ENCODE measurements at regions of chr20 and their contacts with region 1.

Region 1: DNA sequence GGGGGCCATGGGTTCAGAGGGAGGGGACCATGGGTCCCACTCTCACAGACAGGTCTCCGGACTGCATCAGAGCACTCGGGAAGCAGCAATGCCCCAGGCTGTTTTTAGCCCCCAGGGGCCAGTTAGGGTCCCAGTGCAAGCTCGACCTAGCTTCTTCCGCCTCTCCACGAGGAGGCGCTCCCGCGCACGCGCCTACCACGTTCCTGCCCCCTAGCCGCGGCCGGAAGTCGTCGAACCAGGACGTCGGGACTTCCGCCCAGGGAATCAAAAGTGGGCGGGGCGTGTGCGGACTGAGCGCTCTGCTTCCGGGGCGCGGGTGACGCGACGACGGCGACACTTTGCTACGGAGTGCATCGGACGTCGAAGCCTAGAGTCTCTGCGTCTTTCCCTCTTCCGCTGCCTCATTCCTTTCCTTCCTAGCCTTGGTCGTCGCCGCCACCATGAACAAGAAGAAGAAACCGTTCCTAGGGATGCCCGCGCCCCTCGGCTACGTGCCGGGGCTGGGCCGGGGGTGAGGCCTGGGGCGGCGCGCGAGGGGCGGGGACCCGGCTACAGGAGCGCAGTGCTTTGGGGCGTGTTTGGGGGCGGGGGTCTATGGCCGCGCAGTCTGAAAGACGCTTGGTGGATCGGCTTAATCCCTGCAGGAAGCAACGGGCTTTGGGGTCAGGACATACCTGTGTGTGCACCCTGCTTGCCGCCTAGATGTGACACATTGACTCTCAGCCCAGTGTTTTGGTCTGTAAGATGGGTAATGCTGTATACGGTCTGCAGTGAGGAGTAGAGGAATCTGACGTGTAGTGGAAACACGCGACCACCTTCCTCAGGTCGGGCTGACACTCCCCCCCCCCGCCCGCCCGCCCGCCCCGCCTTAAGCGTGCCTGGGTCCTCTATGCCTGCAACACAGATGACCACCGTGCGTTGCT is at the start of gene PRPF6:
- DNase-seq: peak; percentile 98
- ATAC-seq: peak; percentile 71
- H3K4me3 Mint-ChIP-seq: peak within 1 kb of the TSS; percentile 94
- H3K27ac Mint-ChIP-seq: peak within 1 kb of the TSS; percentile 93
- H3K4me1 Mint-ChIP-seq: peaks cover 21% of the 10 kb centered on the region
- H3K27me3 Mint-ChIP-seq: peaks cover 10% of the 10 kb centered on the region
- CTCF ChIP-seq: peak; percentile 60
- total RNA-seq, gene PRPF6: 79.4 to 84.6 TPM (median 80.5 TPM) in 3 replicates

Region 2: DNA sequence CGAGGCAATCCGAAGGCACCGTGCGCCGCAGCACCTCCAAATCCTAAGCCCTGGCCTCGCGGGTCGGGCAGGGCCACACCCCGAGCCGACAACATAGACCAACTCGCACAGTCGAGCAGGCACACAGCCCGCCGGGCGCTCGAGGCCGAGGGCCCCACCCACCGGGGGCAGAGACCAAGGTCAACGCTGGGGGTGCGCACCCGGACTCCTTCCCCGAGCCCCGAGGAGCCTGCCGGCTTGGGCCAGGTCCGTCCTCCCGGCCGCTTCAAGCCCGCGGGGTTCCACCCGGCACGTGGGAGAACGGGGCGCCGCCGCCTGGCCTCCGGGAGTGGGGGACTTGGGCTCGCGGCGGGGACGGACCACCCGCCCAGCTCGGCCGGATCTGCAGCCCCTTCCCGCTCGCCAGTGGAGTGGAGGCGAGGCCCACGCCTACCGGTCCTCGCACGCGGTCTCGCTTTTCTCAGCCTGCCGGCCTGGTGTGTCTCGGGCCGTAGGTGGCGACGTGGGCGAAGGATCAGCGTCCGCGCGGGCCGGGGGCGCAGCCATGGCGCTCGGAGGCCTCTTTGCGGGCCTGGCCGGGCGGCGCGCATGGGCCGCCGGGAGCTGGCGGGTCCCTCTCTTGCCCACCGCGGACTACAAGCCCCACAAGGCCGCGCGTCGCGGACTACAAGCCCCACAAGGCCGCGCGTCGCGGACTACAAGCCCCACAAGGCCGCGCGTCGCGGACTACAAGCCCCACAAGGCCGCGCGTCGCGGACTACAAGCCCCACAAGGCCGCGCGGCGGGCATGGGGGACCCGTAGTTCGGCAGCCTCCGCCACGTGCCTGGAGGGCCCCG is 25.0 kb before region 1 on chr20 and contains the start of gene UCKL1:
- CTCF ChIA-PET with region 1: interaction called, 15 read pairs
- POLR2A ChIA-PET with region 1: interaction called, 4 read pairs
- DNase-seq: peak; percentile 90
- ATAC-seq: peak; percentile 69
- H3K4me3 Mint-ChIP-seq: peak within 1 kb of the TSS; percentile 79
- H3K27ac Mint-ChIP-seq: no peak within 1 kb of the TSS; the same call in 1 of the 2 replicates
- H3K4me1 Mint-ChIP-seq: peaks cover 20% of the 10 kb centered on the region
- H3K27me3 Mint-ChIP-seq: no peaks in the 10 kb centered on the region
- CTCF ChIP-seq: no peak
- total RNA-seq, gene UCKL1: 46.8 to 51.2 TPM (median 48.0 TPM) in 3 replicates

Region 3: GRCh38 chr20:64038565-64039292 is 57.7 kb after region 1 on chr20:
- CTCF ChIA-PET with region 1: interaction called, 51 read pairs
- POLR2A ChIA-PET with region 1: no interaction called
- DNase-seq: peak; percentile 89
- ATAC-seq: peak; percentile 68
- H3K4me3 Mint-ChIP-seq: peak overlapping the region; percentile 54
- H3K27ac Mint-ChIP-seq: no peak overlapping the region
- H3K4me1 Mint-ChIP-seq: peaks cover 28% of the 10 kb centered on the region
- H3K27me3 Mint-ChIP-seq: peaks cover 43% of the 10 kb centered on the region
- CTCF ChIP-seq: peak; percentile 58

Region 4: DNA sequence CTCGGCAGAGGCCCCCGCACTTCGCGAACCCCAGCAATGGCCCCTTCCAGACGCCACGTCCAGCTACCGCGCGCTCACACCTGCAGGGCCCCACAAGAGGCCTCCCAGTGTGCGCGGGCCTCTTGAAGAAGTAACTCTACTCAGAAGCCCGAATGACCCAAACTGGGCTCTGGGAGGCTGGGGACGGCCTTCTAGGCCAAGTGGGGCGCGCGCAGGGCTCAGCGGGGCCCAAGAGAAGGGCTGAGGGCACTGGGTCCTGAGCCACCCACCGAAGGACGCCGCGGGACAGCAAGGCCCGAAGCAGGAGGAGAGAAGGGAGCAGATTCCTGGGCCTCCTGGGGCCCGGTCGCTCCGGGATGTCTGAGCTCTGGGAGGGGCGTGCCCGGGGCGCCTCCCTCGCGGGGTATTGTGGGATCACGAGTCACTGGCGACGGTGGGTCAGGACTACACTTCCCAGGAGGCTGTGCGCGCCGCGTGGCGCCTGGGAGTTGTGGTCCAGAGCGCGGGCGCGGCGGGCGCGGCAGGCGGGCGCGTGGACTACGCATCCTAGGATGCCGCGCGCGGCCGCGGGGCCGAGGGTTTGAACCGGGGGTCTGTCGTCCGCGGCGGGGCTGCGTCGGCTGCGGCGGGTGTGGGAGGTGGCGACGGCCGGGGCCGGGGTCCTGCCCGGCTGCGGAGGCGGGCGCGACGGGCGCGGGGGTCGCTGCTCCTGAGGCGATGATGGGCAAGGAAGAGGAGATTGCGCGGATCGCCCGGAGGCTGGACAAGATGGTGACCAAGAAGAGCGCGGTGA is 81.7 kb after region 1 on chr20 and contains the start of gene TCEA2:
- CTCF ChIA-PET with region 1: interaction called, 24 read pairs
- POLR2A ChIA-PET with region 1: interaction called, 3 read pairs
- DNase-seq: peak; percentile 95
- ATAC-seq: peak; percentile 84
- H3K4me3 Mint-ChIP-seq: peak within 1 kb of the TSS; percentile 82
- H3K27ac Mint-ChIP-seq: no peak within 1 kb of the TSS; the same call in 1 of the 2 replicates
- H3K4me1 Mint-ChIP-seq: peaks cover 31% of the 10 kb centered on the region
- H3K27me3 Mint-ChIP-seq: peaks cover 7% of the 10 kb centered on the region
- CTCF ChIP-seq: no peak
- total RNA-seq, gene TCEA2: 55.8 to 63.6 TPM (median 63.5 TPM) in 3 replicates

Region 5: DNA sequence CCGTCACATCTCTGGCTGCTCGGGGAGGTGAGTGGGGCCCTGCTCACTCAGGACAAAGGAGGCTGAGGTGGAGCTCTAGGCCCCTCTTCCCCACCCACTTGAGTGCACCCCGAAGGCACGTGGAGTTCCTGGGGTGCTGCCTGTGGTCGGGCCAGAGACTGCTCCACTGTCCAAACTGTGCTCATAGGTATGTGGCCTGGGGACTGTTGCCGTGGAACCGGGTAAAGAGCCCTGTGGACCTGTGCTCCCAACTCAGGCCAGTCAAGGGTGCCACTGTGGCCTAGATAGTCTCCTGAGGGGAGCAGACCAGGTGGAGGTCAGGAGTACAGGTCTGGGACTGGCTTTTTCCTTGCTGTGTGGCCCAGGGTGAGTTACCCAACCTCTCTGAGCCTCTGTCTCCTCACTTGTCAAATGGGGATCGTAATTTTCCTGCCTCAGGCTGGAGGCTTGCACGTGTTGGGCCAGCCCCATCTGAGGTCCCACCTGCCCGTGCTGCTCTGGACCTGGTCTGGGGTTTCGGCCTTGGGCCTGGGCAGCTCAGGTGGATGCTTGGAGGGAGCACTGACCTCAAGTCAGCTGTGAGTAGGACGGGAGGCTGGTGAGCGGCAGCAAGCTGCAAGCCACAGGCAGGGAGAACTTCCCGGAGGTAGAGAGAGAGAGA is 138.7 kb after region 1 on chr20:
- CTCF ChIA-PET with region 1: interaction called, 23 read pairs
- POLR2A ChIA-PET with region 1: no interaction called
- DNase-seq: no peak
- ATAC-seq: peak; percentile 15
- H3K4me3 Mint-ChIP-seq: no peak overlapping the region
- H3K27ac Mint-ChIP-seq: peak overlapping the region; percentile 76; the same call in 1 of the 2 replicates
- H3K4me1 Mint-ChIP-seq: peaks cover 5% of the 10 kb centered on the region
- H3K27me3 Mint-ChIP-seq: peaks cover 15% of the 10 kb centered on the region
- CTCF ChIP-seq: no peak